ENCODE measurements at regions of chr12 and their contacts with region 1.

Region 1: GRCh38 chr12:12032851-12033588 is 37.7 kb upstream of the BCL2L14 start:
- DNase-seq: peak; percentile 71 to 90
- ATAC-seq: peak; percentile 80 to 87
- H3K4me3 ChIP-seq: 0 out of 3 replicates have a peak overlapping the region, but pooled peaks have one; percentile 4
- H3K27ac ChIP-seq: peak overlapping the region; percentile 5 to 68; a peak in 3 of 6 replicates
- H3K4me1 ChIP-seq: 0 out of 3 replicates have a peak, but pooled peaks cover 3% of the 10 kb centered on the region
- CTCF ChIP-seq: peak; percentile 96
- EP300 ChIP-seq: no peak
- POLR2A ChIP-seq: no peak
- RAD21 ChIP-seq: peak; percentile 98 to 99

Region 2: DNA sequence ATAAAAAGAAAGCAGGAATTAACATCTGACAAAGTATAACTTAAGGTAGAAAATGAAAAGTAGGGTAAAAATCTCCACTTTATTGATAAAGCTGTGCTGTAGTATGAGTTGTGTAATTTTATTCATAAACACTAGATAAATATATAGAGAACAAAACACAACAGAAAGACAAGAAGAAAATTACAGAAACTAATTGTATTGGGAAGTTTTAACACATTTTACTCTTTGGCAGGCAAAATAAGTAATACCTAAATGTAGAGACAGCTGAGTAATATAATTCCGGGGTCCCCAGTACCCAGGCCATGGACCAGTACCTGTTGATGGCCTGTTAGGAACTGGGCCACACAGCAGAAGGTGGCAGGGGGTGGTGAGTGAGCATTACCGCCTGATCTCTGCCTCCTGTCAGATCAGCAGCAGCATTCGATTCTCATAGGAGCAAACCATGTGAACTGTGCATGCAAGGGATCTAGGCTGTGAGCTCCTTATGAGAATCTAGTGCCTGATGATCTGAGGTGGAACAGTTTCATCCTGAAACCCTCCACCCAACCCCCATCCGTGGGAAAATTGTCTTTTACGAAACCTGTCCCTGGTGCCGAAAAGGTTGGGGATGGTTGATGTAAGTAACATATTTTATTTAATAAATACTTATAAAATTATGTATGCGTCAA is 467.9 kb before region 1 on chr12:
- CTCF ChIA-PET with region 1: interaction called, 13 read pairs
- POLR2A ChIA-PET with region 1: no interaction called
- DNase-seq: no peak
- ATAC-seq: no peak
- H3K4me3 ChIP-seq: no peak overlapping the region
- H3K27ac ChIP-seq: no peak overlapping the region
- H3K4me1 ChIP-seq: 0 out of 3 replicates have a peak, but pooled peaks cover 4% of the 10 kb centered on the region
- CTCF ChIP-seq: no peak
- EP300 ChIP-seq: no peak
- POLR2A ChIP-seq: no peak
- RAD21 ChIP-seq: no peak

Region 3: GRCh38 chr12:11962860-11963259 is 70.2 kb before region 1 on chr12:
- CTCF ChIA-PET with region 1: interaction called, 10 read pairs
- POLR2A ChIA-PET with region 1: no interaction called
- DNase-seq: no peak
- ATAC-seq: no peak
- H3K4me3 ChIP-seq: no peak overlapping the region
- H3K27ac ChIP-seq: no peak overlapping the region
- H3K4me1 ChIP-seq: peaks cover 13% of the 10 kb centered on the region; the same call in 2 of the 3 replicates
- CTCF ChIP-seq: no peak
- EP300 ChIP-seq: no peak
- POLR2A ChIP-seq: no peak
- RAD21 ChIP-seq: no peak

Region 4: DNA sequence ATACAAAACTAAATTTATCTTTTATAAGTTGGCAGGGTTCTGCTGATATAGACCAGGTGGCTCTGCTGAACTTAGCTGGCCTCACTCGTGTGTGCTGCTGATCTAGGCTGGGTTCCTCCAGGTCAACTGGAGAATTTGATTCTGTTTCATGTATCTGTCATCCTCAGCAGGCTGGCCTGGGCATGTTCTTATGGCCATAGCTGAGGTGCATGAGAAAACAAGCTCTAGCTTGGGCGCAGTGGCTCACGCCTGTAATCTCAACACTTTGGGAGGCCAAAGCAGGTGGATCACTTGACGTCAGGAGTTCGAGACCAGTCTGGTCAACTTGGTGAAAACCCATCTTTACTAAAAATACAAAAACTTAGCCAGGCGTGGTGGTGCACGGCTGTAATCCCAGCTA is 13.4 kb after region 1 on chr12:
- CTCF ChIA-PET with region 1: interaction called, 18 read pairs
- POLR2A ChIA-PET with region 1: no interaction called
- DNase-seq: no peak
- ATAC-seq: no peak
- H3K4me3 ChIP-seq: no peak overlapping the region
- H3K27ac ChIP-seq: no peak overlapping the region
- H3K4me1 ChIP-seq: no peaks in the 10 kb centered on the region
- CTCF ChIP-seq: no peak
- EP300 ChIP-seq: no peak
- POLR2A ChIP-seq: no peak
- RAD21 ChIP-seq: no peak

Region 5: GRCh38 chr12:12091977-12092663 is 59.1 kb after region 1 on chr12:
- CTCF ChIA-PET with region 1: no interaction called
- POLR2A ChIA-PET with region 1: no interaction called
- DNase-seq: no peak
- ATAC-seq: peak; percentile 57 to 59; a peak in 5 of 6 replicates
- H3K4me3 ChIP-seq: no peak overlapping the region
- H3K27ac ChIP-seq: peak overlapping the region in 1 of 2 experiments; percentile 29; a peak in 2 of 6 replicates
- H3K4me1 ChIP-seq: peaks cover 13% of the 10 kb centered on the region
- CTCF ChIP-seq: no peak
- EP300 ChIP-seq: no peak
- POLR2A ChIP-seq: no peak
- RAD21 ChIP-seq: no peak

Region 6: GRCh38 chr12:12334367-12335040 is 301.5 kb after region 1 on chr12:
- CTCF ChIA-PET with region 1: interaction called, 25 read pairs
- POLR2A ChIA-PET with region 1: no interaction called
- DNase-seq: peak; percentile 72 to 77
- ATAC-seq: peak; percentile 93
- H3K4me3 ChIP-seq: no peak overlapping the region
- H3K27ac ChIP-seq: peak overlapping the region in 1 of 2 experiments; percentile 9; a peak in 1 of 6 replicates
- H3K4me1 ChIP-seq: peaks cover 13% of the 10 kb centered on the region
- CTCF ChIP-seq: peak; percentile 96
- EP300 ChIP-seq: no peak
- POLR2A ChIP-seq: no peak
- RAD21 ChIP-seq: peak; percentile 80 to 90